Activated CD4-positive, alpha-beta memory T cell treated with anti-CD3 and anti-CD28 coated beads for 36 hours (primary cell): ENCODE measurements at regions of chr3 and their contacts with region 1.

Region 1: GRCh38 chr3:101849051-101849720 is at the start of gene NFKBIZ:
- DNase-seq: peak; percentile 97
- H3K4me3 Mint-ChIP-seq: peak within 1 kb of the TSS; percentile 92
- H3K27ac Mint-ChIP-seq: peak within 1 kb of the TSS; percentile 99
- H3K4me1 Mint-ChIP-seq: peaks cover 45% of the 10 kb centered on the region
- H3K27me3 Mint-ChIP-seq: no peaks in the 10 kb centered on the region
- total RNA-seq, gene NFKBIZ: 65.9 to 74.9 TPM

Region 2: DNA sequence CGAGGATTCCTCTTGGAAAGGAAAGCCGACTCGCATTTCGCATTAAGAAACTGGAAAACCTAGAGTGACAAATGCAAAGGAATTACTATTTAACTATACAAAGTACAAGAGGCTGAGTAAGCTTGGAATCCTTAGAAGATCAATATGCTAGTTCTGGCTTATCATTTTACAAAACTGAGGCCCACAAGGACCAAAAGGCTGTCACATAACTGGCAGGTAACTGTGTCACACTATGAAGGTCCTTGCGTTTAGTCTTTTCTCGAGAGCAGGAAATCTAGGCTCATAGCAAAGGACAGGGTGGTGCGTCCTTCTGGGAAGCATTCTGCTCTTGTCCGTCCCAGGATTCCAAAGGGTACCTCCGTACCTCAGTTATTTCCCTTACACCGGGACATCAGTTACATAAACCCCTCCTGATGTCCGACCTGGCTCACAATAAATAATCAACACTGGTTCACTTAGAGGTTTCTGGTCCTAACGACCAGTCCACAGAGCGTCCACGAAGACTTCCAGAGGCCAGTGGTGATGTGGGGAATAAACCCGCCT is 163.2 kb before region 1 on chr3:
- CTCF ChIA-PET with region 1: interaction called, 3 read pairs
- POLR2A ChIA-PET with region 1: interaction called, 14 read pairs
- intact Hi-C with region 1: no loop called
- DNase-seq: no peak
- H3K4me3 Mint-ChIP-seq: peak overlapping the region; percentile 99
- H3K27ac Mint-ChIP-seq: peak overlapping the region; percentile 99
- H3K4me1 Mint-ChIP-seq: peaks cover 40% of the 10 kb centered on the region
- H3K27me3 Mint-ChIP-seq: no peaks in the 10 kb centered on the region

Region 3: GRCh38 chr3:101779047-101779821 is 70.0 kb before region 1 on chr3 and contains the start of gene NXPE3:
- CTCF ChIA-PET with region 1: no interaction called
- POLR2A ChIA-PET with region 1: interaction called, 9 read pairs
- intact Hi-C with region 1: loop called (anchors 2 kb)
- DNase-seq: peak; percentile 96
- H3K4me3 Mint-ChIP-seq: peak within 1 kb of the TSS; percentile 95
- H3K27ac Mint-ChIP-seq: peak within 1 kb of the TSS; percentile 95
- H3K4me1 Mint-ChIP-seq: peaks cover 51% of the 10 kb centered on the region
- H3K27me3 Mint-ChIP-seq: no peaks in the 10 kb centered on the region
- total RNA-seq, gene NXPE3: 18.7 to 19.8 TPM

Region 4: DNA sequence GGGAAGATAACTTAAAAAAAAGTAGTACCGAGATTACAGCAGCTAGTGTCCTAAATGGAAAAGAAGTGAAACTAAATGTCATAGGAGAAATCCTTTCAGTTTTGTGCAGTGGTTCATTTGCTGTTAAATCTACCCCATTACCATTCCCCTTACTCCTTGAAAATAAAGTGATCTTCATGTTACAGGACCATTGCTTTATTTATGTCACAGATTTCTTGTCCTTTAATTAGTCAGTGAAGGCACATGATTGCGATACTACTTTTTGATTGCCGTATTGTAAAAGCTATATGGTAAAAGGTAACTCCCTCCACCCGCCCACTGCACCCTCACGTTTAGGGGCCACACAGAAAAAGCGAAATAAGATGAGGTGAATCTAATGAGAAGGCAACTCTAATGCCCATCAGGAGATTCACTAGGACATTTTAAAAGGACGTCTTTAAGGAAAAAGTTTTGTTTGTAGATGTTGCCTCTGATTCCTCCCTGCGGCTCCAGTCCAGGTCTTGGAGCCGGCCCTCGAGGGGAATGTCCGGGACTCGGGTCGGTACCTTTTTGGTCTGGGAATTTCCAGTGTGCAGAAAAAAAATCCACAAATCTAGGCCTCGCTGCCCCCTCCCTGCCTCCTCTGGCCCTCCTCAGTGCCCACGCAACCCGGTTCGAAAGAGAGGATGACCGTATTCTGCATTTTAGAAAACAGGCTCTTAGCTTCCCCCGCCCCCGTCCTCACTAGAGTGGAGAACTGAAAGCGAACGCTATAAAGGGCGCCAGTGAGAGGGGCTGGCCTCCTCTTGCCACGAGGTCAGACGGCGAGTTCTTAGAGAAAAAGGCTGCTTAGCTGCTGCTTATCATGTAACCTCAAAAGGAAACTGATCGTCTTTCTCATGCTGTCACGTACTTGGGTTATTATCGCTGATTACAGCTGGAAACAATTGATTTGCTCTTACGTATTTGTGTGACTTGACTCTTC is 21.7 kb before region 1 on chr3:
- CTCF ChIA-PET with region 1: interaction called, 14 read pairs
- POLR2A ChIA-PET with region 1: interaction called, 198 read pairs
- intact Hi-C with region 1: loop called (anchors 1 kb)
- DNase-seq: peak; percentile 95
- H3K4me3 Mint-ChIP-seq: peak overlapping the region; percentile 85
- H3K27ac Mint-ChIP-seq: peak overlapping the region; percentile 96
- H3K4me1 Mint-ChIP-seq: peaks cover 63% of the 10 kb centered on the region
- H3K27me3 Mint-ChIP-seq: no peaks in the 10 kb centered on the region

Region 5: DNA sequence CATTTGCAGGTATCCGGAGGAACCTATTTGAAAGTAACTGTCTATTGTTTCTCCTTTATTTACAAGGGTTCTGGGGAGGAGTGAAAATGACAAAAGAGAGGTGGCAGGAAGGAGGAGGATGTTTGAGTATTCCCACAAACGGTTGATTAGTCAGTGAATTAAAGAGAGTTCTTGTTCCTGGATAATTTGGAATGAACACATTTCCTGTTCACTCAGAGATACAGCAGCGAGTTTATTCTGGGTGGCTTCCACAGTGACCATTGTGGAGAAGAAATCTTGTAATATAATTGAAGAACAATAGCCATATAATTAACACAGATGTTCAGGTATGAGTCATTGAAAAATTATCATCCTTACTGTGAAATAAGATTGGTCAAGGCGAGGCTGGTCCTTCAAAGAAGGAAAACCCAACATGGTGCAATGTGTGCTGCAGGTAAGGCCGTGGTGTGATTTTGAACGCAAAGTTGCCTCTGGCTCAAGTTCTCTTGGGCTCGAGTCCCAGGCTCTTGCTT is 77.5 kb after region 1 on chr3:
- CTCF ChIA-PET with region 1: no interaction called
- POLR2A ChIA-PET with region 1: no interaction called
- intact Hi-C with region 1: loop called (anchors 1 kb)
- DNase-seq: no peak
- H3K4me3 Mint-ChIP-seq: no peak overlapping the region
- H3K27ac Mint-ChIP-seq: no peak overlapping the region
- H3K4me1 Mint-ChIP-seq: peaks cover 29% of the 10 kb centered on the region
- H3K27me3 Mint-ChIP-seq: peaks cover 6% of the 10 kb centered on the region

Region 6: DNA sequence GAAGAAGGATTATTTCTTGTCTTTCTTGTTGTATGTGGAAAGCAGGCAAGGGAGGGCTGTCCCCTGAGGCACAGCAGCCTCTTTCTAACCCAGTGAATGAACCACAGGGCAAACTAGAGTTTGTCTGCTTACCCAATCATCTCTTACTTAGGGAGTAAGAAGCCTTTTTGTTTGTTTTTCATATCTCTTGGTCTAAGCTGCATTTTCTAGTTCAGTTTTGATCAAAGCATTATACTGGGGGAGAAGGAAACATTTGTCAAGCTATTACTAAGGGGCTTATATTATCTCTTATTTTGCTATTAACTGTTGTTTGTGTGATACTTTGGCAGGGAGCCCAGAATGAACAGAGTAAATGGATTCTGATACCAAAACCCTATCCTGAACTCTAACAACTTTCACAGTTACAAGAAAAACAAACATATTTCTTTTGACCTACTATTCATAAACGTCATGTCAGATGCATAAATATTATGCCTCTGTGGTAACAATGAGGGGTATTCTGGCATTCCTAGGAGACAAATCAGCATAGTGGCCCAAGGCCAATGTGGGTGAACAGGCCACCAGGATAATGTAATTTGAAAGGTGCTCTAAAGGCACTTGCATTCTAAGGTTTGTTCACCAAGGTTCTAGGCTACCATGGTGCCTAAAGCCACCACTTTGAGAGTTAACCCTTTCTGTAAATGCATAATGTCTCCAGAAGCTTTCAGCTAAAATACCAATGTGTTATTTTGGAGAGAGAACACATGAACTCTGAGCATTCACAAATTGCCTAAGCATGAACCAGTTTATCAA is 314.0 kb after region 1 on chr3:
- CTCF ChIA-PET with region 1: no interaction called
- POLR2A ChIA-PET with region 1: interaction called, 5 read pairs
- intact Hi-C with region 1: loop called (anchors 2 kb)
- DNase-seq: no peak
- H3K4me3 Mint-ChIP-seq: no peak overlapping the region
- H3K27ac Mint-ChIP-seq: no peak overlapping the region
- H3K4me1 Mint-ChIP-seq: peaks cover 23% of the 10 kb centered on the region
- H3K27me3 Mint-ChIP-seq: no peaks in the 10 kb centered on the region